HEK293 (cell line): ENCODE measurements at regions of chr7 and their contacts with region 1.

Region 1: DNA sequence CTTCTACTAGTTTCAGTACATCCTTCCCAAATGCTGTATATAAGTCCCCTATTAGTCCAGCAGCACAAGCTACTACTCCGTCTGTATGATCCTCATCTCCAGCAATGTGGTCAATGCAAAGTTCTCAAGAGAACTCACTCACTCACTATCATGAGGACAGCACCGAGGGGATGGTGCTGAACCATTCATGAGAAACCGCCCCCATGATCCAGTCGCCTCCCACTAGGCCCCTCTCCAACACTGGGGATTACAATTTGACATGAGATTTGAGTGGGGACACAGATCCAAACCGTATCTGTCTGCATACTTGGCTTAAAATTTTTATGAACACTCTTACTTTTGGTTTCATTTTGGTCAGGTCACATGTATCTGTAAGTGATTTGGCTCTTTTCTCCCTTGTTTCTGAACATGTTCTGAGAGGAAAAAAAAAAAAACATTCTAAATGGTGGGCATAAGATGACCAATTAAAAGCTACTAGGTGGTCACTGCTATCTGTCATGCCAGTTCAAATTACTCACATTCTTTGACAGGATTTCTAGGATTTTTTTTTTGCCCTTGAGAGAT is 60.1 kb downstream of the ZNF783 start:
- H3K4me3 ChIP-seq: no peak overlapping the region
- H3K27ac ChIP-seq: no peak overlapping the region
- H3K4me1 ChIP-seq: no peaks in the 10 kb centered on the region
- CTCF ChIP-seq: no peak

Region 2: GRCh38 chr7:149310113-149310836 is 11.8 kb before region 1 on chr7:
- CTCF ChIA-PET with region 1: interaction called, 17 read pairs
- POLR2A ChIA-PET with region 1: no interaction called
- H3K4me3 ChIP-seq: no peak overlapping the region
- H3K27ac ChIP-seq: no peak overlapping the region
- H3K4me1 ChIP-seq: no peaks in the 10 kb centered on the region
- CTCF ChIP-seq: peak; percentile 48; the same call in 1 of the 2 replicates

Region 3: GRCh38 chr7:149422129-149422913 is 100.3 kb after region 1 on chr7:
- CTCF ChIA-PET with region 1: interaction called, 12 read pairs
- POLR2A ChIA-PET with region 1: no interaction called
- H3K4me3 ChIP-seq: peak overlapping the region; percentile 40
- H3K27ac ChIP-seq: peak overlapping the region; percentile 53; the same call in 1 of the 2 replicates
- H3K4me1 ChIP-seq: no peaks in the 10 kb centered on the region
- CTCF ChIP-seq: peak; percentile 51

Region 4: GRCh38 chr7:149468215-149468614 is 146.2 kb after region 1 on chr7:
- CTCF ChIA-PET with region 1: no interaction called
- POLR2A ChIA-PET with region 1: no interaction called
- H3K4me3 ChIP-seq: no peak overlapping the region
- H3K27ac ChIP-seq: no peak overlapping the region
- H3K4me1 ChIP-seq: no peaks in the 10 kb centered on the region
- CTCF ChIP-seq: no peak